Ovary (tissue), 10 donors: ENCODE measurements at regions of chr6 and their contacts with region 1.

Region 1: GRCh38 chr6:33744001-33744848 is 2.5 kb downstream of the IP6K3 start:
- DNase-seq: peak; percentile 68 to 84 (median 80)
- H3K4me3 ChIP-seq: no peak overlapping the region
- H3K27ac ChIP-seq: no peak overlapping the region
- H3K4me1 ChIP-seq: peaks cover 2% of the 10 kb centered on the region
- H3K27me3 ChIP-seq: no peaks in the 10 kb centered on the region
- CTCF ChIP-seq: peak; percentile 53 to 85 (median 79)
- EP300 ChIP-seq: no peak
- POLR2A ChIP-seq: no peak

Region 2: GRCh38 chr6:33771146-33772081 is 27.2 kb after region 1 on chr6:
- intact Hi-C with region 1: loop called in 1 of 4 experiments (anchors 1 kb)
- DNase-seq: peak; percentile 78 to 88 (median 80)
- H3K4me3 ChIP-seq: no peak overlapping the region
- H3K27ac ChIP-seq: peak overlapping the region; percentile 52 to 76
- H3K4me1 ChIP-seq: peaks cover 16% of the 10 kb centered on the region
- H3K27me3 ChIP-seq: no peaks in the 10 kb centered on the region
- CTCF ChIP-seq: peak; percentile 88 to 98 (median 91)
- EP300 ChIP-seq: no peak
- POLR2A ChIP-seq: no peak